A673 (cell line): ENCODE measurements at regions of chr9 and their contacts with region 1.

Region 1: DNA sequence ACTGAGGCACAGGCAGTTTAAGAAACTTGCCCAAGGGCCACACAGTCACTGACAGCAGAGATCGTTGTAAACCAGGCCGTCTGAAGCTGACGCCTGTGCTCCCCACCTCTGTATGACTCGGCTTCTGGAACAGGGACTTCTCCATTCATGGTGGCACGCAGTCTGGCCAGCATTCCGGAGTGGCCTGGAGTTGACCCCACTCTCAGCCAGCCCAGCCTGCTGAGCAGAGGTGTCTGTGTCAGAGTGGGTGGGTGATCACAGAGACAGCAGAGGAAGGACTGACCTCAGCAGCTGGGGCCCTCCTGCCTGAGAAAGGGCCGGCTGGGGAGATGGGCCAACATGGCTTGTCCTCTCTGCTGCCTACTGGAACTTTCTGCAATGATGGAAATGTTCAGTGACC is 12.6 kb downstream of the LRSAM1 start:
- DNase-seq: no peak
- H3K4me3 ChIP-seq: no peak overlapping the region
- H3K27ac ChIP-seq: no peak overlapping the region
- H3K4me1 ChIP-seq: no peaks in the 10 kb centered on the region
- H3K27me3 ChIP-seq: no peaks in the 10 kb centered on the region
- CTCF ChIP-seq: no peak

Region 2: DNA sequence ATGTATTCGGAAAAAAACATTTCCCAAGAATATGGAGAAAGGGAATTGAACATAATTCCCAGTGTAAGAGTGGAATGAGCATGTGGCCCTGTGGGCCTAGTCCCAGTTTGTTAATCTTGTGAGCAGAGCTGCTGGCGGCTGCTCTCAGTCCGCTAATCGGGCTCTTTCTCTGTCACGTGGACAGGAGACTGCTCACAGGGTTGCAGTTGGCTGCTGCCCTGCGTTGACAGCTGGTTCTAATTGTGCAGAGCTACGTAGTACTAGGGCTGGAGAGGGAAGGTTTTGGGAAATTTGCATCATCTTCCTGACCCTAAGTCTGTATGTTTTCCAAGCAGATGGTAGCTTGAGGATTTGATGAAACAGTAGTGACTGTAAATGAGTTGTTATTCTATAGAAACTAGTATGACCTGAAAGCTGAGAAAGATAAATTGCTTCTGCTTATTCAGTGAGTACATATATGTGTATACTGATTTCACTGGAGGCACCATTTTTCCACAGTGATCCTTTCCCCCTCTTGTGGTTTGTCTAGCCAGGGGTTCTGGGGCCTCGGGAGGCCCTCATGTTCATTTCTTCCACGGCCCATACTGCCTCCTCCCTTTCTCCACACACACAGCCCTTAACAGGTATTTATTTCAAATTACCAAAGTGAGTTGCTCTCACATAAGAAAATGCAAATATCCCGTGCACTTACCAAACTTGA is 442.1 kb before region 1 on chr9:
- CTCF ChIA-PET with region 1: no interaction called
- POLR2A ChIA-PET with region 1: interaction called, 19 read pairs
- intact Hi-C with region 1: no loop called
- DNase-seq: peak; percentile 89
- H3K4me3 ChIP-seq: no peak overlapping the region
- H3K27ac ChIP-seq: peak overlapping the region; percentile 78
- H3K4me1 ChIP-seq: peaks cover 10% of the 10 kb centered on the region
- H3K27me3 ChIP-seq: no peaks in the 10 kb centered on the region
- CTCF ChIP-seq: no peak